ENCODE measurements at regions of chr10 and their contacts with region 1.

Region 1: GRCh38 chr10:119333146-119333792 is 125.9 kb downstream of the GRK5 start:
- DNase-seq: peak; percentile 79
- H3K4me3 Mint-ChIP-seq: no peak overlapping the region
- H3K27ac Mint-ChIP-seq: no peak overlapping the region
- H3K4me1 Mint-ChIP-seq: peaks cover 16% of the 10 kb centered on the region
- H3K27me3 Mint-ChIP-seq: no peaks in the 10 kb centered on the region

Region 2: DNA sequence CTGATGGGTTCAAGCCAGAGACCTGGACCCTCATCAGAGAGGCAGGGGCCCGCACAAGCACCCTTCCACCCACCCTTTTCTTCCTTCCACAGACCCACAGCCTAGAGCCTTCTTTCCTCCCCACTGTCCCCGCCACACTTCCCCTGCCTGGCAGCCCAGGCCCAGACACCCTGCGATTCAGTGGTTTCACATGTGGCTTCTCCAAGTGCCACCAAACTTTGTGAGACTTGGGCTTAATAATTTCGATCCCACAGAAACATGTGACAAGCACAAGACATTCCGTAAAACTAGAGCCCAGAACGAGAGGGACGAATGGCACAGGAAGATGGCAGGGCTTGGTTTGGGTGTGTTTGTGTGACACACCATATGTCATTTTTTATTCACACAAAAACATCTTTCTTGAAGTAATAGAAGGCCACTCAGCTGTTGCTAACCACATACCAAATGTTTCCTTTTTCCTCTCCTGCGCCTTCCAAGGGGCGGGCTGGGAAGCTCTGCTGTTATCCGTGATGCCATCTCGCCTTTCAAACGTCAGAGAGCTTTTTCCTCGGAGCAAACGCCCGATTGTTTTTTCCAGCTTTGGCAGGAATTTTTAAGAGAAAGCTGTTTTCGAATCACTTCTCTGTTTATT is 37.0 kb after region 1 on chr10:
- CTCF ChIA-PET with region 1: interaction called, 3 read pairs
- intact Hi-C with region 1: loop called (anchors 5 kb)
- DNase-seq: peak; percentile 15
- H3K4me3 Mint-ChIP-seq: no peak overlapping the region
- H3K27ac Mint-ChIP-seq: no peak overlapping the region
- H3K4me1 Mint-ChIP-seq: peaks cover 33% of the 10 kb centered on the region
- H3K27me3 Mint-ChIP-seq: no peaks in the 10 kb centered on the region

Measured in activated naive CD4-positive, alpha-beta T cell treated with anti-CD3 and anti-CD28 coated beads for 36 hours (primary cell).